CD4-positive, alpha-beta T cell (primary cell): ENCODE measurements at regions of chr15 and their contacts with region 1.

Region 1: DNA sequence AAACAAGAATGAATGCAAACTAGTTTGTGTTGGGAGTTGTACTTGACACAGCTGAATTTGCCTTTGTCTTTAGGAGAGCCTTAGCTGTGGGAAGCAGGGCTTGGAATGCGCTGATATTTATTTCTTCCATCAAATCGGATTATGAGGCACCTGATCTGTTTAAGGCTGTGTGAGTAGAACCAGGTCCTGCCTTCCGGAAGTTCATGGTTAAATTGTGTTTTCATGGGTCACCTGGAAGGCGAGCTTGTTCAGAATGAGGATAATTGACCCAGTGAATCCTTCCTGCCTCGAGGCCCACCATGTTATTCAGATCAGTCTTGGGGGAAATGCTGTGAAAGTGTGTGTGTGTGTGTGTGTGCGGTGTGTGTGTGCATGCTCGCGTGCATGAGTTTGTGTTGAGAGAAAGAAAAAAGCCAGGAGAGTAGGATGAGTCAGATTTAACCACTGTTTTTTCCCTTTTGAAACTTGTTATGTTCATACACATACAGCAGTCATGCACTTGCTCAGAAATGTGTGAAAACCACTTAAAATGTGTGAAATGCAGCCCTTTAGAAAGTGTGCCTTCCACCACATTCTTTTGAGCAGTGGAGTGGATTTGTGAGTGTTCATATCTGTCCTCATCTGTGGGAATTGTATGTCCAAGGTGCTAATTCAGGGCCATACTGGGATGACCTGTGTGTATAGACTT is 36.7 kb downstream of the SMAD3 start:
- DNase-seq: peak in 9 of 14 experiments; percentile 27 to 88 (median 62)
- ATAC-seq: peak; percentile 41
- H3K4me3 ChIP-seq: peak overlapping the region; percentile 27
- H3K4me3 Mint-ChIP-seq: no peak overlapping the region
- H3K27ac ChIP-seq: peak overlapping the region; percentile 56 to 82
- H3K27ac Mint-ChIP-seq: no peak overlapping the region
- H3K4me1 ChIP-seq: peaks cover 98% of the 10 kb centered on the region
- H3K4me1 Mint-ChIP-seq: peaks cover 26% of the 10 kb centered on the region
- H3K27me3 ChIP-seq: no peaks in the 10 kb centered on the region
- H3K27me3 Mint-ChIP-seq: no peaks in the 10 kb centered on the region
- CTCF ChIP-seq: no peak

Region 2: GRCh38 chr15:66901336-66902100 is 200.5 kb before region 1 on chr15:
- CTCF ChIA-PET with region 1: no interaction called
- POLR2A ChIA-PET with region 1: no interaction called
- intact Hi-C with region 1: no loop called
- DNase-seq: no peak
- ATAC-seq: no peak
- H3K4me3 ChIP-seq: no peak overlapping the region
- H3K4me3 Mint-ChIP-seq: no peak overlapping the region
- H3K27ac ChIP-seq: no peak overlapping the region
- H3K27ac Mint-ChIP-seq: no peak overlapping the region
- H3K4me1 ChIP-seq: no peaks in the 10 kb centered on the region
- H3K4me1 Mint-ChIP-seq: peaks cover 4% of the 10 kb centered on the region
- H3K27me3 ChIP-seq: no peaks in the 10 kb centered on the region
- H3K27me3 Mint-ChIP-seq: no peaks in the 10 kb centered on the region
- CTCF ChIP-seq: no peak

Region 3: GRCh38 chr15:67080900-67081431 is 21.1 kb before region 1 on chr15:
- CTCF ChIA-PET with region 1: interaction called, 11 read pairs
- POLR2A ChIA-PET with region 1: interaction called, 105 read pairs
- intact Hi-C with region 1: loop called (anchors 2 kb)
- DNase-seq: peak in 6 of 14 experiments; percentile 23 to 83 (median 66)
- ATAC-seq: peak; percentile 45
- H3K4me3 ChIP-seq: no peak overlapping the region
- H3K4me3 Mint-ChIP-seq: peak overlapping the region; percentile 32
- H3K27ac ChIP-seq: peak overlapping the region; percentile 45 to 72
- H3K27ac Mint-ChIP-seq: peak overlapping the region; percentile 89
- H3K4me1 ChIP-seq: peaks cover 98% of the 10 kb centered on the region
- H3K4me1 Mint-ChIP-seq: peaks cover 96% of the 10 kb centered on the region
- H3K27me3 ChIP-seq: no peaks in the 10 kb centered on the region
- H3K27me3 Mint-ChIP-seq: no peaks in the 10 kb centered on the region
- CTCF ChIP-seq: no peak

Region 4: GRCh38 chr15:67091071-67091979 is 10.7 kb before region 1 on chr15:
- CTCF ChIA-PET with region 1: interaction called, 4 read pairs
- POLR2A ChIA-PET with region 1: interaction called, 105 read pairs
- intact Hi-C with region 1: no loop called
- DNase-seq: peak in 13 of 14 experiments; percentile 36 to 92 (median 56)
- ATAC-seq: peak; percentile 77
- H3K4me3 ChIP-seq: peak overlapping the region; percentile 17
- H3K4me3 Mint-ChIP-seq: peak overlapping the region; percentile 62
- H3K27ac ChIP-seq: peak overlapping the region; percentile 53 to 77
- H3K27ac Mint-ChIP-seq: peak overlapping the region; percentile 70
- H3K4me1 ChIP-seq: peaks cover 97% of the 10 kb centered on the region
- H3K4me1 Mint-ChIP-seq: peaks cover 79% of the 10 kb centered on the region
- H3K27me3 ChIP-seq: no peaks in the 10 kb centered on the region
- H3K27me3 Mint-ChIP-seq: no peaks in the 10 kb centered on the region
- CTCF ChIP-seq: no peak

Region 5: DNA sequence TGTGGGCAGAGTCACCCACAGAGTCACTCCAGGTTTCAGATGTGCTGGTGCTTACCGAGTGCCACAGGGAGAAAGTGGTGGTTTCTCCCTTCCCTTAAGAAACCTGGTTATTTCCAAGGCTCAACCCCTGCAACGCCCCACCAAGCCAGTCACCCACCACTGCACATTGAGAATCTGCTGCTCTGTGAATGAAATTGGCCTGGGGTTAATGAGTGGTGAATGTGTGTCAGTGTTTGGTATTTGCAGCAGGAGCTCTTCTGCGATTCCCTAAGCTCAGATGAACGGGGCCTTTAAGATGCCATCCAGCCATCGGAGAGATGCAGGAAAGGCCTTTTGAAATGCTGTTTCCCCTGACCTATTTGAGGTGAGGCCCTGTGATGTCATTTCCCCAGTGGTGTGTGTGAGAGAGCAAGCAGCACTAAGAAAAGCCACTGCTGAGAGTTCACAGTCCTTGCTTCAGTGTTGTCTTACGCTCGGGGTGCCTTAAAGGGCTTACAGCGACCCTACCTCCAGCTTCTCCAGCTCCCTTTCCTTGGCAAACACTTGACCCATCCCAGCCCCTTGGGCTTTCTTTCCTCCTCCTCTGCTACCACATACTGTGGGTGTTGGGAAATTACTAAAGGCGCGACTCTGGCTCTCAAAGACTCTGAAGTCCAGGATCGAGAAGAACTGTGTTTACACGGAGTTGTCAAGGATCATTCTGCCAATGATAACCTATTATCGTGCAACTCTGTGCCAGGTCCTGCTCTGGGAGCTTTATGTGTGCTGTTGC is 32.2 kb after region 1 on chr15:
- CTCF ChIA-PET with region 1: no interaction called
- POLR2A ChIA-PET with region 1: interaction called, 14 read pairs
- intact Hi-C with region 1: loop called in 1 of 2 experiments (anchors 2 kb)
- DNase-seq: peak; percentile 50 to 91 (median 58)
- ATAC-seq: peak; percentile 97
- H3K4me3 ChIP-seq: peak overlapping the region; percentile 37
- H3K4me3 Mint-ChIP-seq: peak overlapping the region; percentile 79
- H3K27ac ChIP-seq: peak overlapping the region; percentile 81 to 91
- H3K27ac Mint-ChIP-seq: peak overlapping the region; percentile 96
- H3K4me1 ChIP-seq: peaks cover 92% of the 10 kb centered on the region
- H3K4me1 Mint-ChIP-seq: peaks cover 91% of the 10 kb centered on the region
- H3K27me3 ChIP-seq: no peaks in the 10 kb centered on the region
- H3K27me3 Mint-ChIP-seq: no peaks in the 10 kb centered on the region
- CTCF ChIP-seq: no peak